WTC11 (cell line): ENCODE measurements at regions of chr17 and their contacts with region 1.

Region 1: DNA sequence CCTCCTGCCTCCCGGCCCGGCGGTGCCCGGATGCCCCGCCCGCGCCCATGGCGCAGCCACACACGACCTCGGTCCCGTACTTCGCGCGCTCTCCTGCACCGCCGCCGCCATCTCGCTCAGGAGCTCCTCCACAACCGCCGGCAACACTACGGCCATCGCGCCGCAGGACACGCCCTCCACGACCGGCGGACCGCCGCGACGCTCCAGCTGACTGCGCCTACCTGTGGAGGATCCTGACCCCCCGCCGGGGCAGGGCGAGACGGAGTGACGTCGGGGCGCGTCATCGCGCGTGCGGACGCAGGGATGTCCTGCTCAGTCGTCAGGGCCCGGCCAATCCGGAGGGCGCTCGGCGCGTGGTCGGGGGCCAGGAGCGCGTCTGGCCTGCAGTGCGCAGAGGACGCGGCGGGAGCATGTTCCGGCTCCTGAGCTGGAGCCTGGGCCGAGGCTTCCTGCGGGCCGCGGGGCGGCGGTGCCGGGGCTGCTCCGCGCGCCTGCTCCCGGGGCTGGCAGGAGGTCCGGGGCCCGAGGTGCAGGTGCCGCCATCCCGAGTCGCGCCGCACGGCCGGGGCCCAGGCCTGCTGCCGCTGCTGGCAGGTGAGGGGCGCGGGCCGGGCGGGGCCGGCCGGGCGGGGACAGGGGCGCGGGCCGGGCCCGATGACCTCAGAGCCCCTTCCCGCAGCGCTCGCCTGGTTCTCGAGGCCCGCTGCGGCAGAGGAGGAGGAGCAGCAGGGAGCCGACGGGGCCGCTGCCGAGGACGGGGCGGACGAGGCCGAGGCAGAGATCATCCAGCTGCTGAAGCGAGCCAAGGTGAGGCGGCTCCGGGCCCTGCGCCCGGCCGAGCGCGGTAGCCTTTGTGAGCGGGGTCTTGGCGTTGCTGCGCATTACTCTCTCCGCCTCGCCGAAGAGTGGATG is at the starts of genes TTC19 and ZSWIM7:
- DNase-seq: peak; percentile 98
- ATAC-seq: peak; percentile 94
- H3K4me3 Mint-ChIP-seq: peak within 1 kb of the TSS; percentile 95
- H3K27ac Mint-ChIP-seq: peak within 1 kb of the TSS; percentile 97
- H3K4me1 Mint-ChIP-seq: peaks cover 17% of the 10 kb centered on the region
- H3K27me3 Mint-ChIP-seq: no peaks in the 10 kb centered on the region
- CTCF ChIP-seq: no peak
- total RNA-seq, gene TTC19: 55.3 to 60.0 TPM (median 58.0 TPM) in 3 replicates
- total RNA-seq, gene ZSWIM7: 41.1 to 41.7 TPM (median 41.3 TPM) in 3 replicates

Region 2: DNA sequence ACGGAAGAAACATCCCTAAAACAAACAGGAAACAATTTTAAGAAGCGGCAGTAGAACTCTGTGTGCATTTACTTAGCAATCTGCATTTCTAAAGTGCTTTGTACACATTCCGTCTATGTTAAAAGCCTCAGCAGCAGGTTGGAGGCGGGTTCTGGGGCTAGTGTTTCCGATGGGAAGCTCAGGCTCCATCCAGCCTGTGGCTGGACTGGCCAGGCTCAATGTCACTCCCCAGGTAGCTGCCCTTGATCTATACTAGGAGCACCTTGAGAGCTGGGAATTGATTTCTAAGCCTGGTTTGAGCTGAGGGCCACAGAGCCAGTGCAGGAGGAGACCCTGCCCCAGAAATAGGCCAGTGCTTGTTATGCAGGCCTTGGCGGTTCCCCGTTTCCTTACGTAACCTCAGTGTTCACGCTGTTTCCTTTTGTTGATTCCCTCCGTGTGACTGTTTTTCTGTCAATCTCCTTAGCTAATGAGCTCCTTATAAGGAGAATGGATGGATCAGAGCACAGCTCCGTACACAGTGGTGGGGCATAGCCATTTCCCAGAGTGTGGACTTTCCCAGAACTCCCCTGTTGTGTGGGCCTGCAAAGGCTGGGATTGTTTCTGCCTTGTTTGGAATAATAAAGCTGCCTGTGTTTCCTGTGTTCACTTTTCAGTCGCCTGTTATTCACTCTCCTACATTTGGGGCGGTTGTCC is 33.4 kb before region 1 on chr17:
- CTCF ChIA-PET with region 1: interaction called, 18 read pairs
- POLR2A ChIA-PET with region 1: interaction called, 3 read pairs
- DNase-seq: peak; percentile 82
- ATAC-seq: peak; percentile 90
- H3K4me3 Mint-ChIP-seq: peak overlapping the region; percentile 65
- H3K27ac Mint-ChIP-seq: peak overlapping the region; percentile 100
- H3K4me1 Mint-ChIP-seq: peaks cover 68% of the 10 kb centered on the region
- H3K27me3 Mint-ChIP-seq: no peaks in the 10 kb centered on the region
- CTCF ChIP-seq: no peak

Region 3: DNA sequence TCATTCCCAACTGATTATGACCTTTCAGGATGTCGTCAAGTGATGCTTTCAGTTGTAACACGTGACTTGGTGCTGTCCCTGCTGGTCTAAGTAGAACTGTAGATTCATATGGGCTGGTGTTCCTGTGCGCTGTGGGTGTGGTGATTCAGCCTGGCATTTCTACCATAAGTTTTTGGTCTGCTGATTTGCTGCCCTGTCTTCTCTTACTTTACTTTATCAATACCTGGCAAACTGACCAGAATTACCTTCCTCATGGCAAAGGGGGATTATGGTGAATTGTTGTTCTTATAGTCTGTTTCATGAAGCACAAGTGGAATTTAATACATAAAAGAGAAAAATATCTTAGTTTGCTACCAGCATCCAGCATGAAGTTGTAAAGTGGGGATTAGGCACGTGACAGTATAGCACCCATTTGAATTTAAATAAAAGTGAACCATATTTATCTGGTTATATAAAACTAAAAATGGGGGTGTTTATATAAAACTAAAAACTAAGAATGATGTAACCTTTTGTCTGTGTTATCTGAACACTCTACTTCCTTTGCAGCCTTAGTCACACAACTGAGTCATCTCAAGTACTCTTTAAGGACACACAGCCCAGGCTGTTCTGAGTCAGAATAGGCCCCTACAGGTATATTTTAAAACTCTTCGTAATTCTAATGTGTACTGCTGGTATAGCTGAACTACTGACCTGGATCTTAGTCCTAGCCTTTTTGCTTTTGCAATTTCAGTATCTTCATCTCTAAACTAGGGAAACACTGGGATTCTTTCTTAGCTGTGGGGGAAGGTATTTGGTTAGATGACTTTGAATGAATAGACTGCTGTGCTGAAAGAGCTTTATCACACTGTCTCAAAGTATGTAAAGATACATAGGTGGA is 28.3 kb after region 1 on chr17:
- CTCF ChIA-PET with region 1: no interaction called
- POLR2A ChIA-PET with region 1: no interaction called
- DNase-seq: no peak
- ATAC-seq: no peak
- H3K4me3 Mint-ChIP-seq: no peak overlapping the region
- H3K27ac Mint-ChIP-seq: peak overlapping the region; percentile 23; the same call in 1 of the 2 replicates
- H3K4me1 Mint-ChIP-seq: no peaks in the 10 kb centered on the region
- H3K27me3 Mint-ChIP-seq: no peaks in the 10 kb centered on the region
- CTCF ChIP-seq: no peak